Lower lobe of right lung (tissue), 2 donors: ENCODE measurements at regions of chr13 and their contacts with region 1.

Region 1: GRCh38 chr13:98653463-98653985 is 76.6 kb upstream of the STK24 start:
- DNase-seq: peak; percentile 81
- ATAC-seq: peak; percentile 89
- H3K4me3 ChIP-seq: no peak overlapping the region
- H3K27ac ChIP-seq: no peak overlapping the region
- H3K4me1 ChIP-seq: peaks cover 26% of the 10 kb centered on the region
- H3K27me3 ChIP-seq: no peaks in the 10 kb centered on the region
- CTCF ChIP-seq: peak; percentile 92

Region 2: DNA sequence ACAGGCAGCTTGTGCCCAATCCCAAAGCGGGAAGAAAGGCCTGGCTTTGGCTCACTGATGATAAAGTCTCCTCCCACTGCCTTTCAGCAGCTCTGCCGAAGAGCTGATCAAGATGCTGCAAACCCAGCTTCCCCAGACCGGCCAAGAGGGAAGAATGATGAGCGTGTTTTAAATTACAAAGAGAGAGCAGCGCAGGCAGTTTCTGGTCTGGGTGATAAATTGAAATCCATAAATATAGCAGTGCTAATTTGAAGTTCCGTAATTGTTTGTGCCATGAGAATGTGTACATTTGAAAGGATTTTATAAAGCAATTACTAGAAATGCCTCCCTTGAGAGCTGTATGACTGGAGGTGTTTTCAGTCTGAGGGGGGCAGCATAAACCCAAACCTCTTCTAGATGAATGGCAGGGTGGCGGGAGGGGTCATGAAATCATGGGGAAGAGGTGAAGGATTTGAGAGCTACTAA is 248.4 kb before region 1 on chr13:
- intact Hi-C with region 1: no loop called
- DNase-seq: no peak
- ATAC-seq: peak in 1 of 2 donors; percentile 46
- H3K4me3 ChIP-seq: no peak overlapping the region
- H3K27ac ChIP-seq: no peak overlapping the region
- H3K4me1 ChIP-seq: no peaks in the 10 kb centered on the region
- H3K27me3 ChIP-seq: no peaks in the 10 kb centered on the region
- CTCF ChIP-seq: no peak

Region 3: GRCh38 chr13:98445340-98446233 is 207.9 kb before region 1 on chr13:
- intact Hi-C with region 1: loop called (anchors 10 kb)
- DNase-seq: peak; percentile 81
- ATAC-seq: peak; percentile 89 to 91
- H3K4me3 ChIP-seq: no peak overlapping the region
- H3K27ac ChIP-seq: peak overlapping the region; percentile 4
- H3K4me1 ChIP-seq: peaks cover 10% of the 10 kb centered on the region
- H3K27me3 ChIP-seq: no peaks in the 10 kb centered on the region
- CTCF ChIP-seq: peak; percentile 98

Region 4: DNA sequence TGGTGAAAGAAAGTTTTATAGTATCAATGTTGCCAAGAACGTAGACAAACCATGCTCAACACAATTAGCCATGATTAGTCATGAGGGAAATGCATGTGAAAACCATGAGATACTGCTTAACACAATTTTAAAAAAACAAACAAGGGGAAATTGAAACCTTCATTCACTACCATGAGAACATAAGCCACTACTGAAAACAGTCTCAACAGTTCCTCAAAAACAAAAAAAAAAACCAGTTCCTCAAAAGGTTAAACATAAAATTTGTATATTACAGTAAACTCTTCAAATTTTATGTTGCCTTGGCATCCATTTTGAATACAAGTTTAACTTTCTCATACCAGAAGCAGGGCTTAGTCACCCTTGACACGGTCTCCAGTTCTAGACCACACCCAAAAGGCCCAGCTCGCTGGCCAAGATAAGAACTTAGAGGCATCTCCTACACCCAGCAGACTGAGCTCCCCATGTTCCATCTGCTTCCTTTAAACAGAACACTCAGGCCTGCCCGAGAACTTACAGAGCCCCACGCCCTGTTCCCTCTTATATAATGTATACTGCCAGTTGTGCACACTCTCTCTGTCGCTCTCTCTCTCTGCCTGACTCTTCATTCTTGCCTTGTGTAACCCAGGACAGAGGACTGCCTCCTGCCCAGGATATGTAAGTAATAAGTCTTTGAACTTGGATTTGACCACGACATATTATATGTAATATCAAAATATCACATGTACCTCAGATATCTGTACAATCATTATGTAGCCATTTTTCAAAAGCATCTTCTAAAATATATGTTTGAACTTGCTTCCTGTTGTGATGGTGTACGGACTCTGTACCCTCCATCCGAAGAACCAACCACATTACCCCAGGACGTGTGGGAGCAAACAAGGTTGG is 144.0 kb before region 1 on chr13:
- intact Hi-C with region 1: no loop called
- DNase-seq: peak; percentile 74
- ATAC-seq: peak; percentile 81 to 88
- H3K4me3 ChIP-seq: no peak overlapping the region
- H3K27ac ChIP-seq: peak overlapping the region; percentile 71
- H3K4me1 ChIP-seq: peaks cover 60% of the 10 kb centered on the region
- H3K27me3 ChIP-seq: no peaks in the 10 kb centered on the region
- CTCF ChIP-seq: no peak

Region 5: DNA sequence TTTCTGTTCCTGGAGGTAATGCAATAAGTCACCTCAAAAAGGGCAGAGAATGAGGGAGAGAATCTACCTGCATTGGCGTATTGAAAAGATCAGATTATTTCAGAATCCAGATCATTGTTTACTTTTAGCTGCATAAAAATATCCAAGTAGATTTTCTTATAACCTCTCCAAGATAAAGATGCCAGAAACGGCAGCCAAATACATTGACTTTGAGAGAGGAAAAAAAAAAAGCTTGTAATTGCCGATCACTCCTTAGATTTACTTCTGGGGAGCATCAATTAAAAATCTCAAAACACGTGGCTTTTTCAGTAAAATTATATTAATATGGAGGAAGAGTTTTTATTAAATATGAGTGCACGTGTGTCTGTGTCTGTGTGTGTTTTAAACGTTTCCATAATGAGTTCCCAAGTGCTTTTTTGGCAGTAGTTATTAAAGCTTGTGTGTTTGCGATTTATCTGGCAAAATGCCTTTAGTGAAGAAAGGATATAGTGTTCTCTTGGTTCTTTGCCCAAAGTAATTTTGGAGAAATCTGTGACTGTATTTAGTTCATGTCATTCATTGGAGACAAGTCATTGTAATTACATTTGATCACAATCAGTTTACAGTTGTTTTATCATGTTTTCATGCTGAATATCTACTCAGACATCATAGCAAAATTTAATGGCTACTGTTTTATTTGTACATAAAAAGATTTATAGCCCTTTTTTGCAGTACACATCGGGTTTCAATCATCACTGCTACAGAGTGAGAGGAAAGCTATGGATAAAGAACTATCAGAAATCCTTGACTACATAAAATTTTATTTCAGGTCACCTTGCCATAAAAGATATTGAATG is 1023.8 kb after region 1 on chr13:
- intact Hi-C with region 1: no loop called
- DNase-seq: no peak
- ATAC-seq: no peak
- H3K4me3 ChIP-seq: no peak overlapping the region
- H3K27ac ChIP-seq: no peak overlapping the region
- H3K4me1 ChIP-seq: peaks cover 6% of the 10 kb centered on the region
- H3K27me3 ChIP-seq: no peaks in the 10 kb centered on the region
- CTCF ChIP-seq: no peak